WTC11 (cell line): ENCODE measurements at regions of chr21 and their contacts with region 1.

Region 1: DNA sequence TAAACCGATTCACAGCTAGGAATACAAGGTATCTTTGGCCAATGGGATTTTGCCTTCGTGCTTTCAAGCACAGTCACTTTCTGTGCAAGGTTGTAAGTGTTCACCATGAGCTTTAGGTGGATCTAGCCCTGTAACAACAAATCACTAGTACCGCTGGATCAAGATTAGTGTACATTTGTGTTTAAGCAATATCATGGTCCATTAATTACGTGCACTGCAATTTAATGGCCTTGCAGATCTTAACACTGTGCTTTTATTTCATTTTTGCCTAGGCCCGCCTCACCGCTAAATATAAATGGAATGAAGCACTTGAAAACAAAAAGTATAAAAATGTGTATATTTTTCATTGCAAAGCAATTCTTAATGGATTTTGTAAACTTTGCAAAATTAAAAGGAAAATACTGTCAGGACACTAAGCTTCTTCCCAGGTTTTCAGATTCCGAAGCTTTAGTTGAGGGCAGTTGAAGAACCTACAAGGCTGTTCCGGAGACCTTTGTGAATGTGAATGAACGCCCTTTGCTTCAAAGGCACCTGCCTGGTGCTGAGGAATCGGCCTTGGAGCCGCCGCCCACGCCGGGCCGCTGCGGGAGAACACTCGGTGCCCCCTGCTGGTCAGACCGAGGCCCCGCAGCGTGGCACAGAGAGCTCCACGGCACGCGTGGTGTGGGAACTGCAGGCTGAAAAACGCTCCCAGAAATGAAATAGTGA is 460.9 kb downstream of the DSCAM start:
- DNase-seq: peak; percentile 74
- ATAC-seq: peak; percentile 87
- H3K4me3 Mint-ChIP-seq: no peak overlapping the region
- H3K27ac Mint-ChIP-seq: no peak overlapping the region
- H3K4me1 Mint-ChIP-seq: peaks cover 5% of the 10 kb centered on the region
- H3K27me3 Mint-ChIP-seq: no peaks in the 10 kb centered on the region
- CTCF ChIP-seq: peak; percentile 86

Region 2: DNA sequence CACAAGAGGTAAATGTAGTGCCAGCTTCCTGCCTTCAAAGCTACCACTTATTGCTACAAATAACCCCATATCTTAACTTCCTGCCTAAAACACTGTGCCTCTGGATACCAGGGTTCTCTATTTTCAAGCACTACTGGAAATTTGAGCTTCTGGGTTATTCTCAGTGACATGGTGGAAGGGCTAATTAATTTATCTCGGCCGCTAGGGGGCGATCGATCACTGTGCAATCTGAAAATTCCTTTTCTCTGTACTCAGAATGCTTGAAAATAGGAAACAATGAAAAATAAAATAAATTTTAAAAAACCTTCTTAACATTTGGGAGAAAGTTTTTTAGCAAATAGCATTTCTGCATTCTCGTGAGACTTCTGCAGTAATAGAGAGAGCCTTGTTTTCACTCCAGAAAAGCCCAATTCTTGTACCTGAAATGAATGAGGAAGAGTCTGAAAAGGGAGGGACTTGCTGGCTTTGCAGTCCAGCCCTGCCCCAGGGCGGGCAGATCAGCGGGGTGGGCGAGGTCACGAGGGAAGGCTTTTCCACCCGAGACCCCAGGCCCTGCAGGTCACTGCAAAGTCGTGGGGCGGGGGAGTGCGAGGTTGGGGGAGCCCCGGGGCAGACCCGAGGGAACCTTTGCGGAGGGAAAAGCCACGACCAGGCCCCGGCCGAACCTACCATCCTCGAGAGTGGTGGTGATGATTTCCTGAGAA is 242.1 kb before region 1 on chr21:
- CTCF ChIA-PET with region 1: interaction called, 33 read pairs
- POLR2A ChIA-PET with region 1: no interaction called
- DNase-seq: peak; percentile 69
- ATAC-seq: peak; percentile 69
- H3K4me3 Mint-ChIP-seq: no peak overlapping the region
- H3K27ac Mint-ChIP-seq: no peak overlapping the region
- H3K4me1 Mint-ChIP-seq: peaks cover 5% of the 10 kb centered on the region; the same call in 1 of the 2 replicates
- H3K27me3 Mint-ChIP-seq: no peaks in the 10 kb centered on the region
- CTCF ChIP-seq: peak; percentile 74

Region 3: DNA sequence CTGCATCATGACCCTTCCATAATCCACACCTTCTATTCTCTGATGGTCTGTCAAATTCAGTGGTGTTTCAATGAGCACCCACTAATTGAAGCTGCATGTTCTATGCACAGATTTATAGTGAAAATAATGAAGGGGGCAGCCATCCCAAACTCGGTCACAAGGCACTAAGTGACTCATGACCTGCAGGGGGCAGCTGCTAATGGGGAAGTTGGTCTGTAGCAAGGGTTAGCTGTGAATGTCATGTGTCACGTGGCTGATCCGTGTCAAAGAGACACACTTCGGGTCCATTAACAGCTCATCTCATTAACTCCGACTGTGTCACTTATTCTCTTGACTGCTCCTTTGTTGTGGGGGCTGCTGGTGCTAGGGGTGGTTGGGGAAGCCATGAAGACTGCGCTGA is 212.2 kb before region 1 on chr21:
- CTCF ChIA-PET with region 1: interaction called, 11 read pairs
- POLR2A ChIA-PET with region 1: no interaction called
- DNase-seq: peak; percentile 26
- ATAC-seq: peak; percentile 41
- H3K4me3 Mint-ChIP-seq: no peak overlapping the region
- H3K27ac Mint-ChIP-seq: no peak overlapping the region
- H3K4me1 Mint-ChIP-seq: peaks cover 4% of the 10 kb centered on the region
- H3K27me3 Mint-ChIP-seq: 0 out of 2 replicates have a peak, but pooled peaks cover 2% of the 10 kb centered on the region
- CTCF ChIP-seq: no peak

Region 4: GRCh38 chr21:40254540-40255465 is 131.2 kb before region 1 on chr21:
- CTCF ChIA-PET with region 1: no interaction called
- POLR2A ChIA-PET with region 1: no interaction called
- DNase-seq: no peak
- ATAC-seq: no peak
- H3K4me3 Mint-ChIP-seq: no peak overlapping the region
- H3K27ac Mint-ChIP-seq: no peak overlapping the region
- H3K4me1 Mint-ChIP-seq: no peaks in the 10 kb centered on the region; the same call in 1 of the 2 replicates
- H3K27me3 Mint-ChIP-seq: no peaks in the 10 kb centered on the region; the same call in 1 of the 2 replicates
- CTCF ChIP-seq: no peak

Region 5: GRCh38 chr21:40356649-40357048 is 29.4 kb before region 1 on chr21:
- CTCF ChIA-PET with region 1: interaction called, 11 read pairs
- POLR2A ChIA-PET with region 1: no interaction called
- DNase-seq: no peak
- ATAC-seq: no peak
- H3K4me3 Mint-ChIP-seq: no peak overlapping the region
- H3K27ac Mint-ChIP-seq: no peak overlapping the region
- H3K4me1 Mint-ChIP-seq: no peaks in the 10 kb centered on the region
- H3K27me3 Mint-ChIP-seq: no peaks in the 10 kb centered on the region
- CTCF ChIP-seq: no peak

Region 6: GRCh38 chr21:40404396-40404800 is 18.4 kb after region 1 on chr21:
- CTCF ChIA-PET with region 1: interaction called, 10 read pairs
- POLR2A ChIA-PET with region 1: no interaction called
- DNase-seq: no peak
- ATAC-seq: no peak
- H3K4me3 Mint-ChIP-seq: no peak overlapping the region
- H3K27ac Mint-ChIP-seq: no peak overlapping the region
- H3K4me1 Mint-ChIP-seq: no peaks in the 10 kb centered on the region
- H3K27me3 Mint-ChIP-seq: no peaks in the 10 kb centered on the region
- CTCF ChIP-seq: no peak